ENCODE measurements at regions of chr18 and their contacts with region 1.

Region 1: GRCh38 chr18:36129300-36130038 is at the starts of genes ELP2 and SLC39A6:
- DNase-seq: peak; percentile 91 to 98 (median 94)
- ATAC-seq: peak; percentile 87
- H3K4me3 ChIP-seq: peak within 1 kb of the TSS; percentile 77
- H3K4me3 Mint-ChIP-seq: peak within 1 kb of the TSS; percentile 95
- H3K27ac ChIP-seq: peak within 1 kb of the TSS; percentile 99
- H3K27ac Mint-ChIP-seq: peak within 1 kb of the TSS; percentile 98
- H3K4me1 ChIP-seq: peaks cover 48% of the 10 kb centered on the region
- H3K4me1 Mint-ChIP-seq: peaks cover 75% of the 10 kb centered on the region
- H3K27me3 ChIP-seq: no peaks in the 10 kb centered on the region
- H3K27me3 Mint-ChIP-seq: no peaks in the 10 kb centered on the region
- CTCF ChIP-seq: peak; percentile 0
- total RNA-seq, gene ELP2: 200 to 206 TPM
- total RNA-seq, gene SLC39A6: 10.6 to 11.0 TPM

Region 2: GRCh38 chr18:35040988-35041814 is 1088.3 kb before region 1 on chr18 and contains the start of gene MAPRE2:
- CTCF ChIA-PET with region 1: no interaction called
- POLR2A ChIA-PET with region 1: interaction called, 3 read pairs
- intact Hi-C with region 1: loop called (anchors 5 kb)
- DNase-seq: peak; percentile 98 to 100 (median 99)
- ATAC-seq: peak; percentile 76
- H3K4me3 ChIP-seq: peak within 1 kb of the TSS; percentile 94
- H3K4me3 Mint-ChIP-seq: peak within 1 kb of the TSS; percentile 90
- H3K27ac ChIP-seq: peak within 1 kb of the TSS; percentile 89 to 91
- H3K27ac Mint-ChIP-seq: peak within 1 kb of the TSS; percentile 95
- H3K4me1 ChIP-seq: peaks cover 27% of the 10 kb centered on the region
- H3K4me1 Mint-ChIP-seq: peaks cover 58% of the 10 kb centered on the region
- H3K27me3 ChIP-seq: no peaks in the 10 kb centered on the region
- H3K27me3 Mint-ChIP-seq: no peaks in the 10 kb centered on the region
- CTCF ChIP-seq: no peak
- total RNA-seq, gene MAPRE2: 108 to 112 TPM

Region 3: DNA sequence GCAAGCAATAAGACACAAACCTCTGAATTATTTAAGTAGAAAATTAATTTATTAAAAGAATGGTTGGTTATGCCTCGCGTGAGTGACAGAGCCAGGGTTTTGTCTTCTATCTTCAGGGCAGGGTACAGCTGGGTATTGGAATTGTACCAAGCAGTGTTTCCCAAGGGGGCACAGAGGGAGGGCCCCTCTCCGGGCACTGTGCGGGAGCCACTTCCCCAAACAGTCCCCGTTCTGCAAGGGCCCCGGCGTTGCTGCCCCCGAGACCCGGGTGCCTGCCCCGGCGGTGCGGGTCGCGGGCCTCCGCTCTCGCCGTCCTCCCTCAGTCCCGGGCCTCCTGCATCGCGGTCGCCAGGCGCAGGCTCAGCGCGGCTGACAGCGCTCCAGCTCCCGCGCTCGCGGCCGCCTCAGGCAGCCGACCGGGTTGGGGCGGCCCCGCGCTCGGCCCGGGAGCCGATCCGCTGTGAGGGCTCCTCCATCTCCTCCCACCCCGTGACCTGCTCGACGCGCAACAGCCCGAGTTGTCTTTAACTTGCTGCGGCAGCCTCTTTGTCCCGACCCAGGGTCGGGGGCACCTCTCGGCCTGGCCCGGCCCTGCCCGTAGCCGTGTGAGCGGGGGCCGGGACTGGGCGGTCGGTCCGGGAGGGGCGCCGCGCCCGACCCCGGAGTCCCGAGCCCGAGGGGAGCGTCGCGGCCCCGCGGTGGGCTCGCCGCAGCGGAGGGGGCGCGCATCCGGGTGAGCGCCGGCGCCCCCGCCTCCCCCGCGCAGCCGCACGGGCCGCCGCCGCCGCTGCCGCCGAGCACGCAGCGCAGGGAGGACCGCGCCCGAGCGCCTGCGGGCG is 548.5 kb before region 1 on chr18:
- CTCF ChIA-PET with region 1: no interaction called
- POLR2A ChIA-PET with region 1: no interaction called
- intact Hi-C with region 1: loop called in 1 of 2 experiments (anchors 10 kb)
- DNase-seq: peak; percentile 21 to 84 (median 44)
- ATAC-seq: peak; percentile 75
- H3K4me3 ChIP-seq: peak overlapping the region; percentile 55
- H3K4me3 Mint-ChIP-seq: peak overlapping the region; percentile 63
- H3K27ac ChIP-seq: peak overlapping the region; percentile 26 to 42
- H3K27ac Mint-ChIP-seq: no peak overlapping the region
- H3K4me1 ChIP-seq: peaks cover 18% of the 10 kb centered on the region
- H3K4me1 Mint-ChIP-seq: peaks cover 35% of the 10 kb centered on the region
- H3K27me3 ChIP-seq: no peaks in the 10 kb centered on the region
- H3K27me3 Mint-ChIP-seq: peaks cover 13% of the 10 kb centered on the region
- CTCF ChIP-seq: no peak

Region 4: GRCh38 chr18:36067055-36067957 is 62.2 kb before region 1 on chr18 and contains the start of gene RPRD1A:
- CTCF ChIA-PET with region 1: no interaction called
- POLR2A ChIA-PET with region 1: interaction called, 23 read pairs
- intact Hi-C with region 1: loop called (anchors 2 kb)
- DNase-seq: peak; percentile 92 to 98 (median 96)
- ATAC-seq: peak; percentile 94
- H3K4me3 ChIP-seq: peak within 1 kb of the TSS; percentile 96
- H3K4me3 Mint-ChIP-seq: peak within 1 kb of the TSS; percentile 91
- H3K27ac ChIP-seq: peak within 1 kb of the TSS; percentile 65 to 86
- H3K27ac Mint-ChIP-seq: peak within 1 kb of the TSS; percentile 91
- H3K4me1 ChIP-seq: peaks cover 17% of the 10 kb centered on the region
- H3K4me1 Mint-ChIP-seq: peaks cover 46% of the 10 kb centered on the region
- H3K27me3 ChIP-seq: no peaks in the 10 kb centered on the region
- H3K27me3 Mint-ChIP-seq: no peaks in the 10 kb centered on the region
- CTCF ChIP-seq: no peak
- total RNA-seq, gene RPRD1A: 21.8 to 25.1 TPM

Measured in CD4-positive, alpha-beta T cell (primary cell).